ENCODE measurements at regions of chr17 and their contacts with region 1.

Region 1: GRCh38 chr17:50200457-50201275 is 765 bp downstream of the COL1A1 start:
- DNase-seq: peak; percentile 92
- ATAC-seq: peak; percentile 72
- H3K4me3 Mint-ChIP-seq: peak overlapping the region; percentile 86
- H3K27ac Mint-ChIP-seq: no peak overlapping the region
- H3K4me1 Mint-ChIP-seq: peaks cover 23% of the 10 kb centered on the region
- H3K27me3 Mint-ChIP-seq: peaks cover 54% of the 10 kb centered on the region
- CTCF ChIP-seq: peak; percentile 100

Region 2: DNA sequence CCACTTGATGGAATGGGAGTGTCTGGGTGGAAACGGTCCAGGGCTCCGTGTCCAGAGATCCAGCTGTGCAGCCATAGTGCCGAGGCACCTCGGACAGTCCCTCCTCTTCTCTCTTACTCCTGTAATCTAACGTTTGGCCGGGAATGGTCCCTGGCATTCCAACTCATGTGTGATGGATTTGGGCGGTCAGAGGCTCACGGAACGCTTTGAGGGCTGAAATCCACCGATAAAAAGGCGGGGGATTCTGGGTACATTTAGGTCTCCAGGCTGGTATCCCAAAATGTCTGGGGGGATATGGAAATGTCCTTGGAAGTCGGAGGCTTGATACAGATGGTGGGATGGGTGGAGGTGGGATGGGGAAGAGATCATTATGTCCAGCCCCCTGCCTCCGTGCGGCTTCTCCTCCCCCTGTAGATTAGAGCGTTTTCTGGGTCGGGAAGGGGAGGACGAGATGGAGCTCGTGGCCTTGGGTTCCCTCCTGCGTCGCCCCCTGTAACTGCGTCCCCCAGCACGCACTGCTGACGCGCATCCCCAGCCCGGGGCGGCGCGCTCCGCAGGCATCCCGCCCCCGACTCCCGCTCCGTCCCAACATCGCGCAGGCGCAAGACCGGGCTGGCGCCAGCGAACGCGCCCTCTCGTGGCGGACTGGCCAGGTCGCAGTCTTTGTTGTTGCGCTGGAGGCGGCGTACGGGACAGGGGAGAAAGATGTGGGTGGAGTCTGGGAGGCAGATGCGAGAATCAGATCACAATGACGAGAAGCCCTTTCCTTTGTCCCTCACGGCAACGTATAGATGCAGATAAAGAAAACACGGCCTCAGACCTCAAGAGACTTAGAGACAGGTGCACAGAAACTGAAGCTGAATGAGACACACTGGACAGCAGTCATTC is 39.4 kb before region 1 on chr17:
- CTCF ChIA-PET with region 1: interaction called, 20 read pairs
- POLR2A ChIA-PET with region 1: interaction called, 3 read pairs
- DNase-seq: peak; percentile 96
- ATAC-seq: peak; percentile 92
- H3K4me3 Mint-ChIP-seq: peak overlapping the region; percentile 79
- H3K27ac Mint-ChIP-seq: peak overlapping the region; percentile 51
- H3K4me1 Mint-ChIP-seq: peaks cover 10% of the 10 kb centered on the region
- H3K27me3 Mint-ChIP-seq: peaks cover 33% of the 10 kb centered on the region
- CTCF ChIP-seq: peak; percentile 64

Region 3: GRCh38 chr17:50213026-50214022 is 12.7 kb after region 1 on chr17:
- CTCF ChIA-PET with region 1: interaction called, 155 read pairs
- POLR2A ChIA-PET with region 1: interaction called, 15 read pairs
- DNase-seq: peak; percentile 56
- ATAC-seq: peak; percentile 71
- H3K4me3 Mint-ChIP-seq: no peak overlapping the region
- H3K27ac Mint-ChIP-seq: no peak overlapping the region
- H3K4me1 Mint-ChIP-seq: peaks cover 48% of the 10 kb centered on the region
- H3K27me3 Mint-ChIP-seq: peaks cover 10% of the 10 kb centered on the region
- CTCF ChIP-seq: no peak

Region 4: GRCh38 chr17:50283246-50283645 is 82.6 kb after region 1 on chr17:
- CTCF ChIA-PET with region 1: interaction called, 514 read pairs
- POLR2A ChIA-PET with region 1: no interaction called
- DNase-seq: no peak
- ATAC-seq: no peak
- H3K4me3 Mint-ChIP-seq: no peak overlapping the region
- H3K27ac Mint-ChIP-seq: no peak overlapping the region
- H3K4me1 Mint-ChIP-seq: peaks cover 39% of the 10 kb centered on the region
- H3K27me3 Mint-ChIP-seq: peaks cover 6% of the 10 kb centered on the region; the same call in 1 of the 2 replicates
- CTCF ChIP-seq: no peak

Region 5: GRCh38 chr17:50323060-50323459 is 122.4 kb after region 1 on chr17:
- CTCF ChIA-PET with region 1: interaction called, 10 read pairs
- POLR2A ChIA-PET with region 1: no interaction called
- DNase-seq: no peak
- ATAC-seq: no peak
- H3K4me3 Mint-ChIP-seq: no peak overlapping the region
- H3K27ac Mint-ChIP-seq: no peak overlapping the region
- H3K4me1 Mint-ChIP-seq: no peaks in the 10 kb centered on the region
- H3K27me3 Mint-ChIP-seq: no peaks in the 10 kb centered on the region
- CTCF ChIP-seq: no peak

Region 6: GRCh38 chr17:50361561-50362480 is 161.2 kb after region 1 on chr17:
- CTCF ChIA-PET with region 1: interaction called, 35 read pairs
- POLR2A ChIA-PET with region 1: no interaction called
- DNase-seq: peak; percentile 61
- ATAC-seq: peak; percentile 43
- H3K4me3 Mint-ChIP-seq: no peak overlapping the region
- H3K27ac Mint-ChIP-seq: peak overlapping the region; percentile 91; the same call in 1 of the 2 replicates
- H3K4me1 Mint-ChIP-seq: peaks cover 36% of the 10 kb centered on the region
- H3K27me3 Mint-ChIP-seq: no peaks in the 10 kb centered on the region
- CTCF ChIP-seq: peak; percentile 60

Measured in WTC11 (cell line).